Caco-2 (cell line): ENCODE measurements at regions of chrX and their contacts with region 1.

Region 1: GRCh38 chrX:70454441-70455365 is 10.1 kb downstream of the DLG3 start:
- DNase-seq: peak; percentile 95 to 96
- H3K4me3 ChIP-seq: peak overlapping the region; percentile 86
- H3K4me3 Mint-ChIP-seq: peak overlapping the region; percentile 97
- H3K27ac Mint-ChIP-seq: peak overlapping the region; percentile 94
- H3K4me1 ChIP-seq: peaks cover 16% of the 10 kb centered on the region; the same call in 1 of the 2 replicates
- H3K4me1 Mint-ChIP-seq: peaks cover 6% of the 10 kb centered on the region
- H3K27me3 ChIP-seq: no peaks in the 10 kb centered on the region
- H3K27me3 Mint-ChIP-seq: no peaks in the 10 kb centered on the region
- CTCF ChIP-seq: peak; percentile 69 to 92

Region 2: GRCh38 chrX:70433848-70434351 is 20.8 kb before region 1 on chrX:
- CTCF ChIA-PET with region 1: no interaction called
- POLR2A ChIA-PET with region 1: no interaction called
- intact Hi-C with region 1: loop called (anchors 1 kb)
- DNase-seq: peak; percentile 79 to 84
- H3K4me3 ChIP-seq: peak overlapping the region; percentile 54
- H3K4me3 Mint-ChIP-seq: peak overlapping the region; percentile 86
- H3K27ac Mint-ChIP-seq: peak overlapping the region; percentile 90
- H3K4me1 ChIP-seq: peaks cover 7% of the 10 kb centered on the region; the same call in 1 of the 2 replicates
- H3K4me1 Mint-ChIP-seq: peaks cover 6% of the 10 kb centered on the region
- H3K27me3 ChIP-seq: no peaks in the 10 kb centered on the region
- H3K27me3 Mint-ChIP-seq: no peaks in the 10 kb centered on the region
- CTCF ChIP-seq: peak; percentile 76

Region 3: GRCh38 chrX:70479247-70479921 is 24.7 kb after region 1 on chrX:
- CTCF ChIA-PET with region 1: interaction called, 7 read pairs
- POLR2A ChIA-PET with region 1: no interaction called
- intact Hi-C with region 1: loop called (anchors 2 kb)
- DNase-seq: no peak
- H3K4me3 ChIP-seq: no peak overlapping the region
- H3K4me3 Mint-ChIP-seq: no peak overlapping the region
- H3K27ac Mint-ChIP-seq: no peak overlapping the region
- H3K4me1 ChIP-seq: peaks cover 23% of the 10 kb centered on the region
- H3K4me1 Mint-ChIP-seq: peaks cover 8% of the 10 kb centered on the region
- H3K27me3 ChIP-seq: no peaks in the 10 kb centered on the region
- H3K27me3 Mint-ChIP-seq: no peaks in the 10 kb centered on the region
- CTCF ChIP-seq: no peak

Region 4: GRCh38 chrX:70508296-70508911 is 53.7 kb after region 1 on chrX:
- CTCF ChIA-PET with region 1: interaction called, 8 read pairs
- POLR2A ChIA-PET with region 1: no interaction called
- intact Hi-C with region 1: loop called (anchors 10 kb)
- DNase-seq: no peak
- H3K4me3 ChIP-seq: no peak overlapping the region
- H3K4me3 Mint-ChIP-seq: no peak overlapping the region
- H3K27ac Mint-ChIP-seq: no peak overlapping the region
- H3K4me1 ChIP-seq: no peaks in the 10 kb centered on the region
- H3K4me1 Mint-ChIP-seq: peaks cover 18% of the 10 kb centered on the region
- H3K27me3 ChIP-seq: no peaks in the 10 kb centered on the region
- H3K27me3 Mint-ChIP-seq: no peaks in the 10 kb centered on the region
- CTCF ChIP-seq: no peak

Region 5: DNA sequence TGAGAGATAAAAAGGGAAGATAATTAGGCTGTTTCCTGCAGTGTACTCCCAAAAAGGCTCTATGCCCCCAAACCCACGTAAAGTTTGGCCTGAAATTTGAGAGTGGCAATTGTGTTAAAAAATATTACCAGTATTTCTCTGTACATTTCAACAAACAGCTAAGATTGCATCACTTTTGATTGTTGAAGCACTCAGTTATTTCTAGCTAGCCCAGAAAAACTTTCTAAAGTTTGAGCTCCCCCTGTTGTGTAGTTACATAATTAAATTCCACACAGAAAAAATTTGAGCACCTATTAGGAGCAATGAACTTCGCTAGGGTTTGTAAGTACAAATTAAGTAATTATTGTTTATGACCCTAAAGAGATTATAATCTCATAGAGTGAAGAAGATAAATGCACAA is 99.4 kb after region 1 on chrX:
- CTCF ChIA-PET with region 1: interaction called, 8 read pairs
- POLR2A ChIA-PET with region 1: no interaction called
- intact Hi-C with region 1: loop called (anchors 1 kb)
- DNase-seq: peak in 1 of 2 experiments; percentile 27
- H3K4me3 ChIP-seq: no peak overlapping the region
- H3K4me3 Mint-ChIP-seq: no peak overlapping the region
- H3K27ac Mint-ChIP-seq: no peak overlapping the region
- H3K4me1 ChIP-seq: peaks cover 4% of the 10 kb centered on the region; the same call in 1 of the 2 replicates
- H3K4me1 Mint-ChIP-seq: peaks cover 14% of the 10 kb centered on the region
- H3K27me3 ChIP-seq: no peaks in the 10 kb centered on the region
- H3K27me3 Mint-ChIP-seq: no peaks in the 10 kb centered on the region
- CTCF ChIP-seq: peak in 1 of 2 experiments; percentile 28

Region 6: GRCh38 chrX:70664726-70665125 is 210.0 kb after region 1 on chrX:
- CTCF ChIA-PET with region 1: interaction called, 3 read pairs
- POLR2A ChIA-PET with region 1: no interaction called
- intact Hi-C with region 1: loop called (anchors 1 kb)
- DNase-seq: peak in 1 of 2 experiments; percentile 7
- H3K4me3 ChIP-seq: no peak overlapping the region
- H3K4me3 Mint-ChIP-seq: no peak overlapping the region
- H3K27ac Mint-ChIP-seq: no peak overlapping the region
- H3K4me1 ChIP-seq: peaks cover 14% of the 10 kb centered on the region
- H3K4me1 Mint-ChIP-seq: peaks cover 9% of the 10 kb centered on the region
- H3K27me3 ChIP-seq: no peaks in the 10 kb centered on the region
- H3K27me3 Mint-ChIP-seq: no peaks in the 10 kb centered on the region
- CTCF ChIP-seq: peak in 1 of 2 experiments; percentile 37